ENCODE measurements at regions of chr1 and their contacts with region 1.

Region 1: DNA sequence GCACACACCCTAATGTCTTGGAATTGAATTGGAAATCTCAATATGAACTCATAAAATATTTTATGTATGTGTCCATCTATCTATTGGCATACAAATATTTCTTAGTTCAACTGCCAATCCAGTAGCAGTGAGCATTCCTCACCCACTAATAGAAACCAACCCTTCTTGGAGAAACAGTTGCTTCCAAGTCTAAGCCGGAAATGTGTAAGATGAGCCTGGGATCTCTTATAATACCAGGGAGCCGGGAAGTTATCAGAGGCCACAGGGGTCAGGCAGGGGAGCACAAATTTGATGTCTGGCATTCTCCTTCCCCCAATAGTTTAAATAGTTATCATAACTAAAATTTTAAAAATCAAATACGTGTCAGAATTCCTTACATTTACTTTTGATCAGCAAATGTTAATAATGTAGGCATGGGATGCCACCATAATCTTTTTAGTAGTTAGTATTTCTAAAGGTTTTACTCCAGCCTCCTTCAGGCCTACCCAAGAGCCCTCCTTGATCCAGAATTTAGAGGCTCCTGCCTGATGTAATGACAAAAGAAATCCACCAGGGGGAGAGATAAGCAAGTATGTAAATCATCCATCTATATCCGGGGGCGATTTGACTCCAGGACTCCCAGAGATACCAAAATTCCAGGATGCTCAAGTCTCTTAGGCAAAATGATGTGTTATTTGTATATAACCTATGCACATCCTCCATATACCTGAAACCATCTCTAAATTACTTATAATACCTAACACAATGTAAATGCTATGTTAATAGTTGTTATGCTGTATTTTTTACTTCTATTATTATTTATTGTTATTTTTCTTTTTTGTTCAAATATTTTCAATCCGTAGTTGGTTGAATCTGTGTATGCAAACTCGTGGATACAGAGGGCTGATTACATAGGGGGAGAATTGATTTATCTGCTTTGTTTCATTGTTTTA is 218.7 kb upstream of the COA6 start:
- DNase-seq: peak; percentile 20
- ATAC-seq: peak; percentile 61
- H3K4me3 Mint-ChIP-seq: no peak overlapping the region
- H3K27ac Mint-ChIP-seq: no peak overlapping the region
- H3K4me1 Mint-ChIP-seq: peaks cover 4% of the 10 kb centered on the region
- H3K27me3 Mint-ChIP-seq: peaks cover 4% of the 10 kb centered on the region

Region 2: GRCh38 chr1:234188454-234188792 is 33.8 kb after region 1 on chr1:
- CTCF ChIA-PET with region 1: no interaction called
- POLR2A ChIA-PET with region 1: no interaction called
- intact Hi-C with region 1: loop called in 1 of 2 experiments (anchors 1 kb)
- DNase-seq: peak; percentile 37
- ATAC-seq: no peak
- H3K4me3 Mint-ChIP-seq: no peak overlapping the region
- H3K27ac Mint-ChIP-seq: no peak overlapping the region
- H3K4me1 Mint-ChIP-seq: no peaks in the 10 kb centered on the region
- H3K27me3 Mint-ChIP-seq: peaks cover 39% of the 10 kb centered on the region

Measured in activated CD4-positive, alpha-beta T cell treated with anti-CD3 and anti-CD28 coated beads for 36 hours (primary cell).